ENCODE measurements at regions of chr17 and their contacts with region 1.

Region 1: GRCh38 chr17:82236142-82236981 is 7.5 kb downstream of the SLC16A3 start:
- DNase-seq: peak; percentile 84
- H3K4me3 ChIP-seq: no peak overlapping the region
- H3K27ac ChIP-seq: peak overlapping the region; percentile 35
- H3K4me1 ChIP-seq: peaks cover 39% of the 10 kb centered on the region
- H3K27me3 ChIP-seq: no peaks in the 10 kb centered on the region
- CTCF ChIP-seq: peak; percentile 98

Region 2: DNA sequence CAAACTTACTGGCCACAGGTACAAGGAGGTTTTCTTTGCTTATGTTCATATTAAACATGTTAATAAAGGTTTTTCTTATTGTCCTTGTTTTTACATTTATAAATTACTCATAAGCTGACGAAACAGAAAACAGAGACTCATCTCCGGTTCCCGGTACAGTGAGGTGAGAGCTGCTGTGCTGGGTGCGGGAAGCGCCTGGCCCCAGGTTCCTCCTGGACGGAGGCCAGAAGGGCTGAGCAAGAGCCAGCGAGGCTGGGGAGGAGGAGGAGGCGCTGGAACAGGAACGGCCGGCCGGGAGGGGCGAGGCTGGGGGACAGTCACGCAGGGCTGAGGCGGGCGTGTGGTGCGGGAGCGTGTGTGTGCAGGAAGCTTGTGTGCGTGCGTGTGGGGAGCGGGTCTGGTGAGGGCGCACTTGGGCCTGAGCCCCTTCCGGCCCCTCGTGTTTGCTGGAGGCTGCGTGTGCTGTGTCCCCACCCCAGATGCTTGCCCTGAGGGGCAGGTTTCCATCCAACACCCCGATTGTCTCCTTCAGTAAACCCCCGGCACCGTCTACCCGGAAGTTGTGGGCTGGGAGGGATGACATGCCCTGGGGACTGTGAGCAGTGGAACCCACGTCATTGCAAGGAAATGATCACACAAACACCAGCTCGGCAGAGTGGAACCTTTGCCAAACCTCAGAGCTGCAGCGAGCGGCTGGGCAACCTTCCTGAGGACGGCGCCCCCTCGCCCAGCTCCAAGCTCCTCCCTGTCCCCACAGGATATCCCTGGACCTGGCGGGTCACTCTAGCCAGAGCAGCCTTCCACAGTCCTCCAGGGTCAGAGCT is 61.6 kb after region 1 on chr17:
- CTCF ChIA-PET with region 1: no interaction called
- POLR2A ChIA-PET with region 1: no interaction called
- intact Hi-C with region 1: loop called (anchors 2 kb)
- DNase-seq: peak; percentile 73
- H3K4me3 ChIP-seq: peak overlapping the region; percentile 35
- H3K27ac ChIP-seq: peak overlapping the region; percentile 65
- H3K4me1 ChIP-seq: peaks cover 19% of the 10 kb centered on the region
- H3K27me3 ChIP-seq: no peaks in the 10 kb centered on the region
- CTCF ChIP-seq: no peak

Region 3: DNA sequence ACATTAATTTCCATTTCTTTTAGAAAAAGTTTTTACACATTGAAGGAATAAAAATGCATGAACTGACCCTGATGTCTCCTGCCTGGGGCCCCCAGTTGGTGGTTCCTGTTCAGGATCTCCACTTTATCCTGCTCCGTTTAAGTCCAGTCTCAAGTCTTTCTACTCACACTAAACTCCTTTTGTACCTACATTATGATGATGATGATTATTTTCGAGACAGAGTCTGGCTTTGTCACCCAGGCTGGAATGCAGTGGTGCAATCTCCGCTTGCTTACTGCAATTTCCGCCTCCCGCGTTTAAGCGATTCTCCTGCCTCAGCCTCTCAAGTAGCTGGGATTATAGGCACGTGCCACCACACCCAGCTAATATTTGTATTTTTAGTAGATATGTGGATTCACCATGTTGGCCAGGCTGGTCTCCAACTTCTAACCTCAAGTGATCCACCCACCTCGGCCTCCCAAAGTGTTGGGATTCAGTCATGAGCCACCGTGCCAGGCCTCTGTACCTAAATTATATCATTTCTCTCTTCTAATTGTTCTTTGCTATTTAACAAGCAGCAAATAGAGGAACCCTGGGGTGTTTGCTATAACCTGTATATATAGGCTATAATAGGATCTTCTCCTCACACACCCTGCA is 281.0 kb after region 1 on chr17:
- CTCF ChIA-PET with region 1: no interaction called
- POLR2A ChIA-PET with region 1: interaction called, 16 read pairs
- intact Hi-C with region 1: no loop called
- DNase-seq: peak; percentile 55
- H3K4me3 ChIP-seq: no peak overlapping the region
- H3K27ac ChIP-seq: peak overlapping the region; percentile 47
- H3K4me1 ChIP-seq: no peaks in the 10 kb centered on the region
- H3K27me3 ChIP-seq: no peaks in the 10 kb centered on the region
- CTCF ChIP-seq: no peak